Sciatic nerve (tissue), 2 donors: ENCODE measurements at regions of chr2 and their contacts with region 1.

Region 1: DNA sequence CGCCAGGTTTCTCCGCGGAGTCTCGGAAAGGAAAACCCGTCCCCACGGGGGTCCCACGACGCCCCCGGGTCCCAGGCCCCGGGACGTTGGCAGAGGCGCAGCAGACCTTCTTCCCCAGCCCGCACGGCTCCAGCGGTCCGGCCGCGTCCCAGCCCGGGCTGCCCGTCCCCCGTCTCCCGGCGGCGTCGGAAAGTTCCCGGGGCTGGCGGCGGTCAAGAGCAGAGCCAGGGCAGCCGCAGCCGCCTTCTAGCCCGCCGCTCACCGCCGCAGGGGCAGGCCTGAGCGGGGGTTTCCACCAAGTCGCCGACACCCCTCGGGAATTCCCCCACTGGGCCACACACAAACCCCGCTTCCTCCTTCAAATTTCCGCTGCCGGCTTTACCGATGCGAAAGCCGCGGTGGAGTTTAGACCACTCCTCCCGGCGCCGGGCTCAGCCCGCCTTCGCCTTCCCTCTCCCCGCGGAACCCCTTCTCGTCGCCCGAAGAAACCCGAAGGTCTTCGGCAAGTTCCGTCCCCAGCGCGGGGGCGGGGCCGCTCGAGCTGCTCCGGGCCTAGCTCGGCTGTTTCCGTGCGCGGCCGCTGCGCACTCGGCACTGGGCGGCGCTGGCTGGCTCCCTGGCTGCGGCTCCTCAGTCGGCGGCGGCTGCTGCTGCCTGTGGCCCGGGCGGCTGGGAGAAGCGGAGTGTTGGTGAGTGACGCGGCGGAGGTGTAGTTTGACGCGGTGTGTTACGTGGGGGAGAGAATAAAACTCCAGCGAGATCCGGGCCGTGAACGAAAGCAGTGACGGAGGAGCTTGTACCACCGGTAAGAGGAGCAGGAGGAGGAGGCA is at the start of gene CREB1:
- DNase-seq: peak; percentile 100
- ATAC-seq: peak; percentile 98
- total RNA-seq, gene CREB1: 83.9 TPM

Region 2: DNA sequence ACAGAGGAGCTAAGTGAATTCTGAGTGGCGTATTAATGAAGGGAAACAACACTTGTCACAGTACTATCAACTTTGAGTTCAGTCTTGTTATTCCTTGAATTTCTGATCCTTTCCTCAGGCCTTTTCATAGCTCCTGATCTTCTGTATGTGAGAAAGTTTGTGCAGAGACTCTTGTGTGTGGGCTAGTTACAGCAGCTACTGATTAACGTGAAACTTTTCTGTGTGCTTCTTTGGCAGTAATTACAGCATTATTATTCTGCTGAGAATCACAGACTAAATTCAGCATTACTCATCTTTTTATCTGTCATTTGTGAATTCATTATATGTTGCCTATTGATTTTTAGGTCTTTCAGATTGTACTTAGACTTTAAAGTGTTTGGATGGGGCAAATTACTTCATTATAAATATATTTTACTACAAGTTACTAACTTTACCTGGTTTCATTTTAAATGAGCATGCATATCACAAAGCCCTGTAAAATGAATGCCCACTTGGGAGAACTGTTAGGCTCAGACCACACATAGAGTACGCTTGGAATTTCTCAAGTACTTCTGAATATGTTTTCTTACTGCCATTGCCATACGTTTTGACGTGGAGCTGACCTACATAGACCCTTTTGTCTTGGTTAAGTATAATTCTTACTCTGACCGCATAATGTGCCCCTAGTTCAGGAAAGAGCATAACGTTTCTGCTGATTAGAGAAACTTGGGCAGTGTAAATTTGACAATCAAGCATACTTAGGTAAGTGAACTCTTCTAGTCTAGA is 36.4 kb after region 1 on chr2:
- intact Hi-C with region 1: loop called (anchors 5 kb)
- DNase-seq: no peak
- ATAC-seq: no peak